PC-9 (cell line): ENCODE measurements at regions of chr12 and their contacts with region 1.

Region 1: DNA sequence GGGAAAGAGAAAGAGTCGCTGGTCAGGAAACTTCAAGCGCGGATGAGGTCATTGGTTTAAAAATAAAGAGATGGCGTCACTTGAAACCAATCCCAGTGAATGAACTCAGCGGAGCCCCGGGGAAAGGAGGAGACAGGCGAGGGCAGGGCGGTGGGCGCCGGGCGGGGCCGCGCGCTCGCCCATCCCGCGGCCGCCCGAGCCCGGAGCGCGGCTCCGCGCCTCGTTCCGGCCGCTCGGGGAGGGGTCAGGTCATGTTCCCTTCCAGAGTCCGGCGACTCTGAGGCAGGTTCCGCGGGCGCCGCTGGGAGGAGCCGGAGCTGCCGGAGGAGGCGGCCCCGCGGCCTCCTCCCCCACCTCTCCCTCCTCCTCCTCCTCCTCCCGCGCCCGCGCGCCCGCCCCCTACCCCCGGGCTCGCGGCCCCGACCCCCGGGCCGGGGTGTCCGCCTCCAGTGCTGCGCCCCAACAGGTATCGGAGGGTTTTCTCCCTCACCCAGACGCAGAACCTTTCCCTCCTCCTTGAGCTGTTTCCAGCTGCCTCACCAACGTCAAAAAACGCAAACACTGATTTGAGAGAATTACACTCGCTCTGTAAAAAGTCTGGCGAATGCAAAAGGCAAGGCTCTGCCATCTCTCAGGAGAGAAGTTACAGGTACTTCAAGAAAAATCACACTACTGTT is at the start of gene DUSP16:
- DNase-seq: peak; percentile 90 to 99
- H3K4me3 ChIP-seq: peak within 1 kb of the TSS; percentile 73
- H3K27ac ChIP-seq: peak within 1 kb of the TSS; percentile 92
- H3K4me1 ChIP-seq: peaks cover 25% of the 10 kb centered on the region
- H3K27me3 ChIP-seq: no peaks in the 10 kb centered on the region
- CTCF ChIP-seq: peak; percentile 36; the same call in 1 of the 2 replicates
- total RNA-seq, gene DUSP16: 23.6 and 24.8 TPM in 2 replicates

Region 2: GRCh38 chr12:12582895-12583303 is 20.2 kb after region 1 on chr12:
- CTCF ChIA-PET with region 1: interaction called, 10 read pairs
- POLR2A ChIA-PET with region 1: interaction called, 7 read pairs
- intact Hi-C with region 1: loop called (anchors 1 kb)
- DNase-seq: peak; percentile 60 to 99
- H3K4me3 ChIP-seq: peak overlapping the region; percentile 12; the same call in 1 of the 2 replicates
- H3K27ac ChIP-seq: peak overlapping the region; percentile 91
- H3K4me1 ChIP-seq: peaks cover 64% of the 10 kb centered on the region
- H3K27me3 ChIP-seq: no peaks in the 10 kb centered on the region
- CTCF ChIP-seq: no peak

Region 3: DNA sequence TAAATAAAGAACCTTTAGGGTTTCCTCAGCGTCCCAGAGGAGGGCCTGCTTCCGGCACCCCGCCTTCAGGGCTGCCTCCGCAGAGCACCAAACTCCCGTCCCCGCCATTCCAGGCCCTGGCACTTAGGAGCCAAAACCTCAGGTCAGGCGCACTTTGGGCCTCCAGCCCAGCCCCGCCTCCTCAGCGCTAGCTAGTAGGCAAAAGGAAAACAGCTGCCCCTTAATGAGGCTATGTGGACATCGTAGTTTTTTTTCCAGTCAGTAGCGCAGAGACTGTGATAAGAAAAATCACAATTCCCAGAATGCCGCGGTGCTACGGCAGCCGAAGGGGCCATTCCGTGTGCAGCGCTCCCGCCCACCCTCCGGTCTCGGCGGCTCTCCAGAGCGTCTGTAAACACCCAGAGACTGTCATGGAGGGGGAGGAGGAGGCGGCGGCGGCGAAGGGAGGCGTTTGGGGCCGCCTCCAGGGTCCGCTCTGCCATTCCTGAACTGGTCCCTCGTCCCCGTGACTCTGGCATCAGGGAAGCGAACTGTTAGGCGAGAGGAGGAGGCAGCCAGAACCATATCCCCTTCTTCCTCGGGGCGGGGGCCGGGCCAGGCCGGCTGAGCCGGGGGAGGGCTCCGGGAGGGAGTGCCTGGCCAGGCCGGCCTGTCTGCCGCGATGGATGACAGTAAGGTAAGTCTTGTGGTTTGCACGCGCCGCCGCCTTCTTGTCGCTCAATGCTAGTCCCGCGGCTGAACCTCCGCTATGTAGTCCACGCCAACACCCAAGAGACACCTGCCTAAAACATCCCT is 49.0 kb after region 1 on chr12 and contains the start of gene CREBL2:
- CTCF ChIA-PET with region 1: no interaction called
- POLR2A ChIA-PET with region 1: interaction called, 6 read pairs
- intact Hi-C with region 1: loop called (anchors 1 kb)
- DNase-seq: peak; percentile 91 to 93
- H3K4me3 ChIP-seq: peak within 1 kb of the TSS; percentile 89
- H3K27ac ChIP-seq: peak within 1 kb of the TSS; percentile 83
- H3K4me1 ChIP-seq: peaks cover 30% of the 10 kb centered on the region
- H3K27me3 ChIP-seq: no peaks in the 10 kb centered on the region
- CTCF ChIP-seq: no peak
- total RNA-seq, gene CREBL2: 26.6 and 30.3 TPM in 2 replicates

Region 4: DNA sequence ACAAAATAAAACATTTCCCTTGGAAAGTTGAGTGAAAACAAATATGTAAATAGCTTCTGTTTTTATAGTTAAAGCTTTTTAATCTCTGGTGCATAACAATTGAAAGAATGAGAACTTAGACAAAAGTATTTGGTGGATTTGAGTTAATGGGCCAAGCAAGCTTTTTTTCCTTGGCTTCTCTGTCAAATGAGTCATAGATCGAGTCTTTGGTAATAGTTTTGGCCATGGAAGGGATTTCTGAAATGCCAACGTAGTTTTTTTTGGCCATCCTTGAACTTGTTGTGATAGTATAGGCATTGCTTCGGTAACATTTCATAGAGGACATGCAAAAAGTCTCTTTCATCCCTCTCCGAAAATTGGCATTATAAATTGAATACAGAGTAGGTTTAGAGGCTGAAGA is 98.4 kb after region 1 on chr12:
- CTCF ChIA-PET with region 1: no interaction called
- POLR2A ChIA-PET with region 1: no interaction called
- intact Hi-C with region 1: loop called (anchors 2 kb)
- DNase-seq: no peak
- H3K4me3 ChIP-seq: no peak overlapping the region
- H3K27ac ChIP-seq: no peak overlapping the region
- H3K4me1 ChIP-seq: no peaks in the 10 kb centered on the region
- H3K27me3 ChIP-seq: no peaks in the 10 kb centered on the region
- CTCF ChIP-seq: no peak

Region 5: GRCh38 chr12:12749433-12749832 is 186.7 kb after region 1 on chr12:
- CTCF ChIA-PET with region 1: no interaction called
- POLR2A ChIA-PET with region 1: no interaction called
- intact Hi-C with region 1: no loop called
- DNase-seq: no peak
- H3K4me3 ChIP-seq: no peak overlapping the region
- H3K27ac ChIP-seq: no peak overlapping the region
- H3K4me1 ChIP-seq: peaks cover 22% of the 10 kb centered on the region
- H3K27me3 ChIP-seq: no peaks in the 10 kb centered on the region
- CTCF ChIP-seq: no peak

Region 6: DNA sequence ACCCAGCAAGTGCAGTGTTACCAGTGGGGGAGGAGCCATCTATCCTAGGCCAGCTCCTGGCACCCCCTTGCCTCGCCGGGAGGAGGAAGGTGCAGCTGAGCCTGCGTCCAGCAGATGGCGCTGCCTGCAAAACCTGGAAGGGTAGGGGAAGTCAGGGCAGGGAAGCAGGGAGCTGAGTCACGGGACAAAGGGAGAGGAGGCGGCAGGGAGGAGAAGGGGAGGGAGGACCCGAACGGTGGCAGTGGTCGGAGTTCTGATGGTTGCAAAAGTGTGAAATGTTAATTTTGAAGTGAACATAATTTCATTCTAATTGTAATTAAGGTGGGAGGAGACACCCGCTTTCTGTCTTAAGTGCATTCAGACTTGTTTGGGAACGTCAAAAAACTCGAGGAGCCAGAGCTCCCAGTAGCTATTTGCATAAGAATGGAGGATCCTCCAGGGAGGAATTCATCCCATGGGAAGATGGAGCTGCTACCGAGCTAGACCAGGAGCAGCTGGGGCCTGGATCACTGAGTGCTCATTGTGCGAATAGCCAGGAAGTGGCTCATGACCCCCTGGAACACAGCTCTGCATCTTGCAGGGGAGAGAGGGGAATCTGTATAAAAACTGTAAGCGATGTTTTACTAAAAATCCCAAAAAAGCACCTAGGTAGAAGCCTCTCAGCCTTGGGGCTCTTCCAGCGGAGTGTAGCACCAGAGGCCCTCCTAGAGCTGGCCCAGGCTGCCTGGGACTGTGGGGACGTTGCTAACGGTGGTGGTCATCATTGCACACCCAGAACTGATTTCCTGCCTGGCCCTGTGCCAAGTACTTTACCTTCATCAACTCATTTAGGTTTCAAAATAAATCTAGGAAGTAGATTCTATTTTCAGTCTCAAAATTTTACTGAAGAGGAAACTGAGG is 693.3 kb after region 1 on chr12:
- CTCF ChIA-PET with region 1: no interaction called
- POLR2A ChIA-PET with region 1: no interaction called
- intact Hi-C with region 1: no loop called
- DNase-seq: peak; percentile 80 to 99
- H3K4me3 ChIP-seq: peak overlapping the region; percentile 36; the same call in 1 of the 2 replicates
- H3K27ac ChIP-seq: no peak overlapping the region
- H3K4me1 ChIP-seq: peaks cover 14% of the 10 kb centered on the region
- H3K27me3 ChIP-seq: no peaks in the 10 kb centered on the region
- CTCF ChIP-seq: peak; percentile 97

Region 7: DNA sequence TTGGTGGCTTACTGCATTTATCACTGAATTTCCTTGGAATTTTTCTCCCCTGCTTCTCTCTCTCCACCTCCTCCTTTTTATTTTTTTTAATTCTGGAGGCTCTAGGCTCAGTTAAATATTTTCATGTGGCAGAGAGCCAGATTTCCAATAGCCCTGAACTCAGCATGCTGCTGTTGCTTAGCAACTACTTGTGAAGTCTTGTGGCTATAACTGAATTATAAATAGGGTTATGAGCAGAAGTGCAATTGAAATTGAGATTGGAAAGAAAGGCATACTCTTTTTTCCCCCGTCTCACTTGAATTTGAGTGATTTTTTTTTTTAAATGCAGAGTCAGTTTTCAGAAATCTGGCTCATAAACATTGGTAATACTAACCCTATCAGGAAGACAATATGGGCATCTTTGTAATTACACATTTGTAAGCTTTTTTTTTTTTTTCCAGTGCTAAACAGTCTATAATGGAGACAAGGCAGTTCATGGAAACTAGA is 1841.0 kb after region 1 on chr12:
- CTCF ChIA-PET with region 1: no interaction called
- POLR2A ChIA-PET with region 1: interaction called, 13 read pairs
- intact Hi-C with region 1: no loop called
- DNase-seq: no peak
- H3K4me3 ChIP-seq: no peak overlapping the region
- H3K27ac ChIP-seq: peak overlapping the region; percentile 1; the same call in 1 of the 2 replicates
- H3K4me1 ChIP-seq: peaks cover 9% of the 10 kb centered on the region; the same call in 1 of the 2 replicates
- H3K27me3 ChIP-seq: no peaks in the 10 kb centered on the region
- CTCF ChIP-seq: no peak